Dorsolateral prefrontal cortex (tissue), 120 donors: ENCODE measurements at regions of chr22 and their contacts with region 1.

Region 1: GRCh38 chr22:30423982-30424963 is 1.3 kb upstream of the MTFP1 start:
- DNase-seq: peak; percentile 97 to 99 (median 98)
- H3K4me3 ChIP-seq: peak overlapping the region; percentile 32 to 91 (median 78)
- H3K27ac ChIP-seq: peak overlapping the region; percentile 87 to 100 (median 98)
- H3K27me3 ChIP-seq: no peaks in the 10 kb centered on the region
- CTCF ChIP-seq: peak in 26 of 56 donors; percentile 1 to 57 (median 18)

Region 2: GRCh38 chr22:30396871-30397655 is 27.2 kb before region 1 on chr22 and contains the start of gene SEC14L2:
- intact Hi-C with region 1: loop called (anchors 2 kb)
- DNase-seq: peak; percentile 74 to 92 (median 88)
- H3K4me3 ChIP-seq: peak within 1 kb of the TSS; percentile 59 to 96 (median 84)
- H3K27ac ChIP-seq: peak within 1 kb of the TSS; percentile 71 to 97 (median 94)
- H3K27me3 ChIP-seq: no peaks in the 10 kb centered on the region
- CTCF ChIP-seq: peak in 11 of 56 donors; percentile 5 to 35 (median 14)
- total RNA-seq, gene SEC14L2: 48.9 to 142 (median 72.0) TPM

Region 3: DNA sequence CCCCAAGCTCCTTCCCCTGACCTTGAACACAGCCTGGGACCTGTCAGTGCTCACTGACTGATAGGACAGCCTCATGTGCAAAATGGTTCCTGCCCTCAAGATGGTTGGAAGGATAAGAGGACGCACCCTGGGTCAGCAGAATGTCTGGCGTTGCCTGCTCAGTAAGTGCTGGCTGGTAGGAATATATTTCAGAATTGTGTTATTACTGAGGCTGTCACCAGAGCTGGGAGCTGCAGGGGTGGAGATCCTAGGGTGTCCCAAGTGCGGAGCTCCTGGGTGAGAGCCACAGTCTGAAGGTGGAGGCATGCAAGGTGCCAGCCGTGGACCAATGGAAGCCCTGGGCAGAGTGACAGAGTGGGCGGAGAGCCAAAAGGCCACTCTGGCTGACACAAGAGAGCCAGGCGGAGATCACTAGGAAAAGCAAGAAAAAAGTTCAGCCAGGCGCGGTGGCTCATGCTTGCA is 82.3 kb after region 1 on chr22:
- intact Hi-C with region 1: no loop called
- DNase-seq: no peak
- H3K4me3 ChIP-seq: no peak overlapping the region
- H3K27ac ChIP-seq: no peak overlapping the region
- H3K27me3 ChIP-seq: peaks cover 0 to 27% (median 5%) of the 10 kb centered on the region in 45 donors
- CTCF ChIP-seq: no peak

Region 4: DNA sequence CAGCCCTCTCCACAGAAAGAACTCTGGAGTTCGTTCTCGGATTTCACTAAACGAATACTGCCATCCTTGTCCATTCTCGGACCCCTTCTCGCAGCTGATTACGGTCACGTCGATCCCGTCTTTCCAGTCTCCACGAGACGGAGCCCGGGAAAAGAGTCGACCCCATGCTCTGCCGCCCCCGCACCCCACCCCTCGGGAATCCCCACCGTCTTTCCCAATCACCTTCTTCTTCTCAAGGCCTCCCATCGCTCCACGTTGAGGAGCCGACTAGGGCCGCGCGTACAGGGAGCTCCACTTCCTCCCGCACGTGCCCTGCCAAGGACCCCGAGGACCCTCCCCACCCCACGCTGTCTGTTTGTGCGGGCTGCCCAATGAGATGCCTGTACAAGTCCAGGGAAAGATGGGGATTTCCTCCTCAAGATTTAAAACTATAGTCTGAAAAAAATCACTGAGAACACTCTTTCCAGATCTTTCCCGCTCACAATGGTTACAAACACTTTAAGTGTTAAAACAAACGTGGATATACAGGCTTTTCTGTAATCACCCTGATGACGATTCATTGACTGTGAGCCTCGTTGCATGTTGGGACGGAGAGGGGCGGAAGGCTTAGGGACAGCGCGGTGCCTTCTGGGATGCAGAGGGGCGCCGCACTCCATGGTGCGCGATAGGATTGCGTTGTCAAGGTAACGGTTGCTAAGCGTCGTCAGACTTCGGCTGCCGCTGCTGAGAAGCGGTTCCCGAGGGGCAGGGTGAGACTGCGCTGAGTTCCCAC is 167.5 kb after region 1 on chr22 and contains the start of gene PES1:
- intact Hi-C with region 1: loop called in 1 of 2 experiments (anchors 2 kb)
- DNase-seq: peak; percentile 91 to 97 (median 96)
- H3K4me3 ChIP-seq: peak within 1 kb of the TSS; percentile 69 to 99 (median 92)
- H3K27ac ChIP-seq: peak within 1 kb of the TSS; percentile 43 to 96 (median 91)
- H3K27me3 ChIP-seq: no peaks in the 10 kb centered on the region
- CTCF ChIP-seq: peak in 29 of 56 donors; percentile 7 to 61 (median 24)
- total RNA-seq, gene PES1: 32.3 to 60.0 (median 44.4) TPM